Right lobe of liver (tissue), 6 donors: ENCODE measurements at regions of chr2 and their contacts with region 1.

Region 1: DNA sequence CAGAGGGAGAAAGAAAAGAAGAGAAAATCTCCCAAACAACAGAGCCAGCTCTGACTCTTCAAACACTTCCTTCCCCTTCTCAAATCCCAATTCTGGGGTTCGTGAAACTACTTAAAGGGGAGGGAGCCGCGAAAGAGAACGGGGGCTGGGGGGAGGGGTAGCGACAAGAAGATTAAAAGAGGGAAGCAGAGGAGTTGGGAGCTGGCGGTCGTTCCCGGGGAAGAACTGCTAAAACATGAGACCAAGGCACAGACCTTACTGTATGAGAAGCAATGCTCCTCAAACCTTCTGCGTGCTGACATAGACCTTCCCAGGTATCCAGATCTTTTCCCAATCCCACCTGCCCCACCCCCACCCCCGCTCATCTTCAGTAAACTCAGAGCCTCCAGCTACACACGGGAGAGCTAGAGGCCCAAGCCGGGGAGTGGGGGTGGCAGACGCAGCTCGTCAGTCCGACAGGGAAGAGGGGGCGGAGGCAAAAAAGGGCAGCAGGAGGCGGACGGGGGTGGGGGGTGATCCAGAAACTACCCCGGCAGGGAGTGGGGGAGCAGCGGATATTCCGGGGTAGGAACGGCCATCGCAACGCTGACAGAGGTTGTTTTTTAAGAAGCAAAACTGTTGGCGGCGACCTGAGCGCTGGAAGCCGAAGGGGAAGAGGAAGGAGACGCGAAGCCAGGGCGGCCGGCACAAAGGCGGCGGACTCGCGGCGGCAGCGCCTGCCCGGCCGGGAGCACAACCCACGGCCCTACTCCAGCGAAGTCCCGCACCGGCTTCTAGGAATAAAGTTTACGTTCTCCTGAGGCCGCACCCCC is 1.0 kb downstream of the BAZ2B start:
- DNase-seq: peak; percentile 94 to 96 (median 95)
- ATAC-seq: peak; percentile 89 to 96 (median 91)
- H3K4me3 ChIP-seq: peak overlapping the region; percentile 66 to 68 (median 66)
- H3K27ac ChIP-seq: peak overlapping the region; percentile 97 to 98 (median 97)
- H3K4me1 ChIP-seq: peaks cover 0 to 22% (median 2%) of the 10 kb centered on the region in 4 donors
- H3K27me3 ChIP-seq: no peaks in the 10 kb centered on the region
- CTCF ChIP-seq: no peak
- POLR2A ChIP-seq: peak; percentile 73

Region 2: GRCh38 chr2:159712143-159712928 is 97.0 kb after region 1 on chr2 and contains the start of gene MARCHF7:
- intact Hi-C with region 1: loop called in 1 of 2 experiments (anchors 10 kb)
- DNase-seq: peak; percentile 97 to 99 (median 98)
- ATAC-seq: peak; percentile 97
- H3K4me3 ChIP-seq: peak within 1 kb of the TSS; percentile 73 to 93 (median 90)
- H3K27ac ChIP-seq: peak within 1 kb of the TSS; percentile 91 to 98 (median 97)
- H3K4me1 ChIP-seq: peaks cover 0 to 27% (median 10%) of the 10 kb centered on the region in 4 donors
- H3K27me3 ChIP-seq: no peaks in the 10 kb centered on the region
- CTCF ChIP-seq: peak; percentile 51 to 80 (median 69)
- POLR2A ChIP-seq: peak; percentile 97
- total RNA-seq, gene MARCHF7: 20.1 to 41.2 (median 29.8) TPM

Region 3: GRCh38 chr2:159867567-159868361 is 252.4 kb after region 1 on chr2:
- intact Hi-C with region 1: no loop called
- DNase-seq: no peak
- ATAC-seq: no peak
- H3K4me3 ChIP-seq: no peak overlapping the region
- H3K27ac ChIP-seq: no peak overlapping the region
- H3K4me1 ChIP-seq: no peaks in the 10 kb centered on the region
- H3K27me3 ChIP-seq: no peaks in the 10 kb centered on the region
- CTCF ChIP-seq: no peak
- POLR2A ChIP-seq: no peak